A549 (cell line): ENCODE measurements at regions of chr11 and their contacts with region 1.

Region 1: GRCh38 chr11:64688534-64688982 is 34.4 kb downstream of the NRXN2 start:
- DNase-seq: peak; percentile 89 to 90
- ATAC-seq: peak; percentile 90 to 98
- H3K4me3 ChIP-seq: peak overlapping the region; percentile 39
- H3K27ac ChIP-seq: peak overlapping the region; percentile 56 to 82
- H3K4me1 ChIP-seq: no peaks in the 10 kb centered on the region
- CTCF ChIP-seq: peak; percentile 99
- EP300 ChIP-seq: no peak
- POLR2A ChIP-seq: no peak
- RAD21 ChIP-seq: peak; percentile 54 to 87

Region 2: GRCh38 chr11:64652586-64653387 is 35.8 kb before region 1 on chr11:
- CTCF ChIA-PET with region 1: interaction called, 26 read pairs
- POLR2A ChIA-PET with region 1: interaction called, 3 read pairs
- DNase-seq: peak; percentile 71 to 92
- ATAC-seq: peak; percentile 71 to 90
- H3K4me3 ChIP-seq: no peak overlapping the region
- H3K27ac ChIP-seq: no peak overlapping the region
- H3K4me1 ChIP-seq: peaks cover 13% of the 10 kb centered on the region; the same call in 2 of the 3 replicates
- CTCF ChIP-seq: peak; percentile 89
- EP300 ChIP-seq: no peak
- POLR2A ChIP-seq: no peak
- RAD21 ChIP-seq: peak; percentile 91 to 93

Region 3: GRCh38 chr11:64665411-64665821 is 23.1 kb before region 1 on chr11:
- CTCF ChIA-PET with region 1: interaction called, 28 read pairs
- POLR2A ChIA-PET with region 1: no interaction called
- DNase-seq: no peak
- ATAC-seq: peak in 1 of 2 experiments; percentile 25; a peak in 2 of 6 replicates
- H3K4me3 ChIP-seq: no peak overlapping the region
- H3K27ac ChIP-seq: no peak overlapping the region
- H3K4me1 ChIP-seq: no peaks in the 10 kb centered on the region
- CTCF ChIP-seq: no peak
- EP300 ChIP-seq: no peak
- POLR2A ChIP-seq: no peak
- RAD21 ChIP-seq: no peak

Region 4: GRCh38 chr11:64703048-64703447 is 14.5 kb after region 1 on chr11:
- CTCF ChIA-PET with region 1: interaction called, 88 read pairs
- POLR2A ChIA-PET with region 1: interaction called, 3 read pairs
- DNase-seq: no peak
- ATAC-seq: no peak
- H3K4me3 ChIP-seq: no peak overlapping the region
- H3K27ac ChIP-seq: no peak overlapping the region
- H3K4me1 ChIP-seq: no peaks in the 10 kb centered on the region
- CTCF ChIP-seq: no peak
- EP300 ChIP-seq: no peak
- POLR2A ChIP-seq: no peak
- RAD21 ChIP-seq: no peak

Region 5: DNA sequence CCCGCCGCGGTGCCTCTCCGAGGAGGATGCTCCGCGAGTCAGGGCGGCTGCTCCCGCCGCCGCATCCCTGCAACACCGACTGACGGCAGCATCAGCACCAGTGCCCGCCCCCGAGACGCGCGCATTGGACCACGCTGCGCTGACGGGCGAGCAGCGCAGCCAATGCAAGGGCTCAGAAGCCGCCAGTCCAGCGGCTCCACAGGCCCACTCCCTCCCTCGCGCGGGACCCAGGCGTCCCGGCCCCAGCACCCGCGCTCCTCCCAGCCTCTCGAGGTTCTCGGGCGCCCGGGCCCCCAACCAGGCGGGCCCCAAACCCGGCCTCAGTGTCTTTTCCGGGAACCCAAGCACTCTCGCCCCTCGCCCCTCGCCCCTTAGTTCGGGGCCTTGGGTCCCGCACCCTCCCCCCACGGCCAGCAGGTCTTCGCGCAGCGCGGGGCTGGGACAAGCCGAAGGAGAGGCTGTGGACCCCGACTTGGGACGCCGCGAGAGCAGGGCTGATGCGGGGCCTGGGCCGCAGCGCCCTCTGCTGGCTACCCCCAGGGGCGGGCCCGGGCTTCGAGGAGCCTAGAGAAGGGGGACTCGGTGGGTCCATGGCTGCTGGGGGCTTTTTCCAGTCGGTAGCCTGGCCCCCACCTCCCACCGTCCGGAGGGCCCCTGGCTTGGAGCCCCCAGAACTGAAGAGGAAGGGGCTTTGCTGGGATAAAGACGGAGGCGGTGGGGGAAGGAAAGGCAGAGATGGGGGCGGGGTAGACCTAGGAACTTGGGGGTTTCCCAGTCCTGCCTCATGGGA is 34.8 kb after region 1 on chr11 and contains the start of gene NRXN2:
- CTCF ChIA-PET with region 1: interaction called, 48 read pairs
- POLR2A ChIA-PET with region 1: no interaction called
- DNase-seq: peak; percentile 88 to 98
- ATAC-seq: peak; percentile 90 to 98
- H3K4me3 ChIP-seq: peak within 1 kb of the TSS; percentile 94
- H3K27ac ChIP-seq: peak within 1 kb of the TSS; percentile 88 to 95
- H3K4me1 ChIP-seq: peaks cover 18% of the 10 kb centered on the region; the same call in 2 of the 3 replicates
- CTCF ChIP-seq: peak; percentile 96
- EP300 ChIP-seq: no peak
- POLR2A ChIP-seq: no peak
- RAD21 ChIP-seq: peak; percentile 54 to 75; a peak in 4 of 5 replicates
- polyA plus RNA-seq, gene NRXN2: not detected in 2 replicates

Region 6: GRCh38 chr11:64742889-64743590 is 54.5 kb after region 1 on chr11:
- CTCF ChIA-PET with region 1: interaction called, 57 read pairs
- POLR2A ChIA-PET with region 1: no interaction called
- DNase-seq: peak; percentile 48 to 92
- ATAC-seq: peak; percentile 35 to 74
- H3K4me3 ChIP-seq: peak overlapping the region; percentile 61
- H3K27ac ChIP-seq: peak overlapping the region; percentile 62 to 83
- H3K4me1 ChIP-seq: peaks cover 28% of the 10 kb centered on the region
- CTCF ChIP-seq: peak; percentile 85
- EP300 ChIP-seq: no peak
- POLR2A ChIP-seq: no peak
- RAD21 ChIP-seq: peak; percentile 38 to 68